Mammary epithelial cell (primary cell): ENCODE measurements at regions of chr12 and their contacts with region 1.

Region 1: DNA sequence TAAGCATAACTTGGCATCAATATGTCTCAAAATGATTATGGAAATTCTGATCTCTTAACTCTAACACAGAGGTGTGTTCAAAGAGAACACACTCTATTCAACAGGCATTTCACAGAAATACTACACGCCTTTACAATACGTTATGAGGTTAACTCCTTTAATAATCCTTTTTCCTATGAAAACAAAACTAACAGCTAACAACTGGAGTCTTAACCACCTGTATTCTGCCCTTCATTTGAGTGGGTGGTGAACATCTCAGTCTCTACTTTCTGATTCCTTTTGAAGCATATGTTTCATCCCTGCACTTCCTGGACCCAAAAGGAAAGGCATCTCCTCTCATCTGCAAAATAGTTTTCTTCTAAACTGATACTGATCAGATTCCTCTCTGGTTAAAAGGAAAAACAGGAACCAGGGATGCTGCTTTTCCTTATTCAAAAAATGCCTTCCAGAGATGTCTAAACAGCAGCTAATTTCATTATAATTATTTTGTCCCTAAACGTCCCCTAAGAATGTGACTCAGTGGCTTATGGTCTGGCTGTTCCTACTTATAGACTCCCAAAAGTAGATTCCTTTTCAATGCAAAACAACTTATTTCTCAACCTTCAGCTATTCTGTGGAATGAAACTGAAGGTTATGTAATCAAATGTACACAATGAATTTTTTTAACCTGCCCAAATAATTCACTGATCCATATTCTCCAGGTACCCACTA is 24.1 kb downstream of the ITPR2 start:
- DNase-seq: no peak
- H3K4me3 ChIP-seq: no peak overlapping the region
- H3K27ac ChIP-seq: no peak overlapping the region
- H3K4me1 ChIP-seq: peaks cover 16% of the 10 kb centered on the region
- H3K27me3 ChIP-seq: no peaks in the 10 kb centered on the region
- CTCF ChIP-seq: no peak

Region 2: DNA sequence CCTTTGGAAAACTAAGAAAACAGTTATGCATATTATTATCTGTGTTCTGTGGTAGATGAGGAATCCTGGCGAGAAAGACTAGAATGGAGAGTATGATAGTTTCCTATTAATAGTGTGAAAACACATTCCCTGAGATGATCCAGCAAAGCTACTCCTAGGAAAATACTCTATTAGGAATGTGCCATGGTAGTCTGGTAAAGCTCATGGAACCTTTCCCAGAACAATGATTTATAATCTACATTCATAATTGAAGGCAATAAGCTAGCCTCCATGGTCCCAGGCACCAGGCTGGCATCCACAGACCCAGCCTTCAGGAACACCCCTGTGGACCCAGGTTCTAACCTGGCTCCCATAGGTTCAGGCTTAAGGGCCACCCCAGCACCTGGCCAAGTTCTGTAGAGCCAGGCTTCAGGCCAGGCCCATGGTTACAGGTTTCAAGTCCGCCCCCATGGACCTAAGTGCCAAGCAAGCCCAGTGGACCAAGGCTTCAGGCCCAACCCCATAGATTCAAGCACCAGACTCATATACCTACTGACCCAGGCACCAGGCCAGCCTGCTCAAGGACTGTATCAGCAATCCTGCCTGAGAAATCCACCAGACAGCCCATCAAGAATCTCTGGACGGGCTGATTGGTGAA is 48.1 kb before region 1 on chr12:
- CTCF ChIA-PET with region 1: no interaction called
- dilution Hi-C with region 1: no loop called
- in situ Hi-C with region 1: no loop called
- intact Hi-C with region 1: no loop called
- DNase-seq: no peak
- H3K4me3 ChIP-seq: no peak overlapping the region
- H3K27ac ChIP-seq: no peak overlapping the region
- H3K4me1 ChIP-seq: no peaks in the 10 kb centered on the region
- H3K27me3 ChIP-seq: no peaks in the 10 kb centered on the region
- CTCF ChIP-seq: no peak

Region 3: DNA sequence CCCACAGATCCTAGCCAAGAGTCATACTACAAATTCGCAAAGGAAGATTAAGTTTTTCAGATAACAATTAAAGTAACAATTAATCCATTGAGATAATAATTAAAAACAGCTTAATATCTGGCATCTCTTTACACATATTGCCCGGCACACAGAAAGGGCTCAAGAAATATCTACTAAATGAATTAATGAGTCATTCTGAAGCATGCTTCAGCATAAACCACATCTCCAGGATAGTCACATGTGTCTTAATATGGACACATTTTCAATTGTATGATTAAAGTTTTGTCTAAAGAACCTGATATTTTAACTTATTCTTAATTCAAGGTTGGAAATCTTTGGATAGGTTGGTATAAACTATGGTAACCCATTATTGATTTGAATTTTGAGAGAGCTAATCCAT is 14.5 kb after region 1 on chr12:
- CTCF ChIA-PET with region 1: no interaction called
- dilution Hi-C with region 1: no loop called
- in situ Hi-C with region 1: no loop called
- intact Hi-C with region 1: loop called (anchors 2 kb)
- DNase-seq: peak; percentile 46
- H3K4me3 ChIP-seq: no peak overlapping the region
- H3K27ac ChIP-seq: peak overlapping the region; percentile 19
- H3K4me1 ChIP-seq: peaks cover 15% of the 10 kb centered on the region
- H3K27me3 ChIP-seq: no peaks in the 10 kb centered on the region
- CTCF ChIP-seq: no peak